ENCODE measurements at regions of chr15 and their contacts with region 1.

Region 1: DNA sequence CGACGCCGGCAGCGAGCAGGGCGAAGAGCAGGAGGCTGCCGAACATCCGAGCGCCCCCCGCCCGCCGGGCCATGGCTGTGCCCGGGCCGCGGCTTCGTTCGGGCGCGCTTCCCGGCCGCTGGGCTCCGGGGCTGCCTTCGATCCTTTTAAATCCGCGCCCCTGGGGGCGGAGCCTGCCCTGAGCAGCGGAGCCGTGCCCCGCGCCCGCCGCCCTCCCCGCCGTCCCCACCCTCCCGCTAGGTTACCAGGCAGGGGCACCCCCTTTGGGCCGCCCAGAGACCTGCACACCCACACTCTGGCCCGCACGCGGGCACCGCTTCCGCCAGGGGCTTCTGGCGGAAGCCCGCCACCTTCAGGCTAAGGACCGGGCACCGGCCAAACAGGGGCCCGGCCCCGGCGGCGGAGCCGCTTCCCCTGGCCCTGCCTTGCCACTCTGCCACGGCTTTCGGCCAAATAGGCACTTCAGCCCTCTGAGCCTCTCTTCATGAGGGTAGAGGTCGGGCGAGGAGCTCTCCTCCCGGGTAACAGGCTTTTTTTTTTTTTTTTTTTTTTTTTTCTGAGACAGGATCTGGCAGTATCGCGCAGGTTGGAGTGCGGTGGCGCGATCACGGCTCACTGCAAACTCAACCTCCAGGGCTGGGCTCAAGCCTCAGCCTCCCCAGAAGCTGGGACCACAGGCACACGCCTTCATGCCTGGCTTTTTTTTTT is at the start of gene NMB:
- DNase-seq: peak; percentile 89
- H3K4me3 ChIP-seq: peak within 1 kb of the TSS; percentile 35 to 76 (median 66)
- H3K27ac ChIP-seq: peak within 1 kb of the TSS; percentile 87 to 92 (median 90)
- H3K4me1 ChIP-seq: peaks cover 0 to 36% (median 21%) of the 10 kb centered on the region in 4 donors
- H3K27me3 ChIP-seq: no peaks in the 10 kb centered on the region
- CTCF ChIP-seq: peak; percentile 19 to 67 (median 38)
- EP300 ChIP-seq: no peak
- POLR2A ChIP-seq: no peak
- total RNA-seq, gene NMB: 3.0 to 8.9 (median 8.0) TPM

Region 2: DNA sequence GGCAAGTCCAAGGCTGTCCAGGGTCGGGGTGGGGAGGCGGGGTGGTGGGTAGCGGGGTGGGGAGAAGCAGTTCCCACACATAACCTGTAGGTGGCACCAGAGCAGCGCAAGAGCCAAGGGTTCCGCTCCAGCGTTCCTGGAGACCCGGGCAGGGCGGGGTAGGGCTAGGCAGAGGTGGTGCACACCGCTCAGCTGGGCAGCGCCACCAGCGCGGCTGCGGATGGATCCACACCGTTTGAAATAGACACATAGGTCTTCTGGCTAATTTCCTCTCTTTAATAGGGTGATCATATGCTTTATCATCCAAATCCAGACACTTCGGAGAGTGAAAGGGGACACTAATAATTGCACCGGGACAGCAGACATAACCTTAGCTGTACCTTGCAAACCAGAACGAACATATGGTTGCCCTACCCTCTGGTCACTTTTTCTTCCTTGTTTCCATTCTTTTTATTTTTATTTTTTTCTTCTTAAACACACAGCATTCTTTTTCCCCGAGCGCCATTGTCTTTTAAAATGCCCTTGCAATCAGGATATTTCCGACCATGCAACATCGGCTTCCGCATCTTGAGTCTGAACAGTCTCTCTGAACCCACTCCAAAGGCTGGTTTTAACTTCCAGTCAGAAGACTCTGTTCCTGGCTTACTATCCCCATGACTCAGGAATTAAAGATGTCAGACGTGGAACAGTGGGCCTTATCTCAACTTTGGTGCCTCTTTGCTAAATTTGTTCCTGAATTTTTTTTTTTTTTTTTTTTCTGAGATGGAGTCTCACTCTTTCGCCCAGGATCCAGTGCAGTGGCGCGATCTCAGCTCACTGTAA is 70.0 kb before region 1 on chr15:
- intact Hi-C with region 1: loop called (anchors 2 kb)
- DNase-seq: peak; percentile 91
- H3K4me3 ChIP-seq: peak overlapping the region in 3 of 4 donors; percentile 29 to 38 (median 34)
- H3K27ac ChIP-seq: peak overlapping the region in 1 of 4 donors; percentile 3
- H3K4me1 ChIP-seq: peaks cover 0 to 9% (median 6%) of the 10 kb centered on the region in 4 donors
- H3K27me3 ChIP-seq: no peaks in the 10 kb centered on the region
- CTCF ChIP-seq: peak; percentile 47 to 99 (median 50)
- EP300 ChIP-seq: no peak
- POLR2A ChIP-seq: no peak

Region 3: DNA sequence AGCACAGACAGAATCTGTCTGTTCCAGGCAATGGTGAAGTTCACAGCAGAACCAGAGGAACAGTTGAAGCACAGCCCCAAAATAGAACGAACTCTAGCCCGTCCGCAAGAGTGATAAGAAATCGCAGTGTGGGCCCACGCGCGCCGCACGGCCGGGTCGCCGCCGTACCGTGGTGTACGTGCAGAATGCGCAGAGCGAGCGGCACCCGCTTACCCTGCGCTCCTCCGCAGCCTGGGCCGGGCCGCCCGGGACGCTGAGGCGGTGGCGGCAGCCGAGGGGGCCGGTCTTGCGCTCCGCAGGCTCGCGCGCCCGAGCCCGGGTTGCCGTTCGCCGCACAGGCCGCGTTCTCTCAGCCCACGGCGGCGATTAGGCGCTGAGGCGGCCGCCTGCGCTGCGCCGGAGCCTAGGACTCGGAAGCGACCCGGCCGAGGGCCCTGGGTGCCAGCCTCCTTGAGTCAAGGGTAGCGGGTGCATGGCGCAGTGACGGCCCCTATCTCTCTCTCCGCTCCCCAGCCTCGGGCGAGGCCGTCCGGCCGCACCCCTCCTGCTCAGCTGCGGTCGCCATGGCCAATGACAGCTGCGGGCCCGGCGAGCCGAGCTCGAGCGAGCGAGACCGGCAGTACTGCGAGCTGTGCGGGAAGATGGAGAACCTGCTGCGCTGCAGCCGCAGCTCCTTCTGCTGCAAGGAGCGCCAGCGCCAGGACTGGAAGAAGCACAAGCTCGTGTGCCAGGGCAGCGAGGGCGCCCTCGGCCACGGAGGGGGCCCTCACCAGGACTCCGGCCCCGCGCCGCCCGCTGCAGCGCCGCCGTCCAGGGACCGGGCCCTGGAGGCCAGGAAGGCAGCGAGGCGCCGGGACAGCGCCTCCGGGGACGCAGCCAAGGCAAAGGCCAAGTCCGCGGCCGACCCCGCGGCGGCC is 24.7 kb before region 1 on chr15:
- intact Hi-C with region 1: loop called (anchors 1 kb)
- DNase-seq: peak; percentile 83
- H3K4me3 ChIP-seq: peak overlapping the region; percentile 55 to 79 (median 67)
- H3K27ac ChIP-seq: peak overlapping the region; percentile 88 to 97 (median 92)
- H3K4me1 ChIP-seq: peaks cover 0 to 48% (median 38%) of the 10 kb centered on the region in 4 donors
- H3K27me3 ChIP-seq: no peaks in the 10 kb centered on the region
- CTCF ChIP-seq: no peak
- EP300 ChIP-seq: no peak
- POLR2A ChIP-seq: no peak

Region 4: DNA sequence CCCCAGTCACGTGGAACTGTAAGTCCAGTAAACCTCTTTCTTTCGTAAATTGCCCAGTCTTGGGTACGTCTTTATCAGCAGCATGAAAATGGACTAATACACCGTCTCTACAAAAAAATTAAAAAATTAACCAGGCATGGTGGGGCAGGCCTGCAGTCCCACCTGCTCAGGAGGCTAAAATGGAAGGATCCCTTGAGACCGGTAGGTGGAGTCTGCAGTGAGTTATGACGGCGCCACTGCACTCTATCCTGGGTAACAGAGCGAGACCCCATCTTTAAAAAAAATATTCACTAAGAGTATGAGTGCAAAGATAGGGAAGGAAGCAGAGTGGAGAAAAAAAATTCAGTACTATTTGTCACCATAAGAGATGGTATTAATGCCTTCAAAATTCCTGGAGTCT is 32.1 kb after region 1 on chr15:
- intact Hi-C with region 1: no loop called
- DNase-seq: no peak
- H3K4me3 ChIP-seq: no peak overlapping the region
- H3K27ac ChIP-seq: no peak overlapping the region
- H3K4me1 ChIP-seq: no peaks in the 10 kb centered on the region
- H3K27me3 ChIP-seq: no peaks in the 10 kb centered on the region
- CTCF ChIP-seq: no peak
- EP300 ChIP-seq: no peak
- POLR2A ChIP-seq: no peak

Region 5: DNA sequence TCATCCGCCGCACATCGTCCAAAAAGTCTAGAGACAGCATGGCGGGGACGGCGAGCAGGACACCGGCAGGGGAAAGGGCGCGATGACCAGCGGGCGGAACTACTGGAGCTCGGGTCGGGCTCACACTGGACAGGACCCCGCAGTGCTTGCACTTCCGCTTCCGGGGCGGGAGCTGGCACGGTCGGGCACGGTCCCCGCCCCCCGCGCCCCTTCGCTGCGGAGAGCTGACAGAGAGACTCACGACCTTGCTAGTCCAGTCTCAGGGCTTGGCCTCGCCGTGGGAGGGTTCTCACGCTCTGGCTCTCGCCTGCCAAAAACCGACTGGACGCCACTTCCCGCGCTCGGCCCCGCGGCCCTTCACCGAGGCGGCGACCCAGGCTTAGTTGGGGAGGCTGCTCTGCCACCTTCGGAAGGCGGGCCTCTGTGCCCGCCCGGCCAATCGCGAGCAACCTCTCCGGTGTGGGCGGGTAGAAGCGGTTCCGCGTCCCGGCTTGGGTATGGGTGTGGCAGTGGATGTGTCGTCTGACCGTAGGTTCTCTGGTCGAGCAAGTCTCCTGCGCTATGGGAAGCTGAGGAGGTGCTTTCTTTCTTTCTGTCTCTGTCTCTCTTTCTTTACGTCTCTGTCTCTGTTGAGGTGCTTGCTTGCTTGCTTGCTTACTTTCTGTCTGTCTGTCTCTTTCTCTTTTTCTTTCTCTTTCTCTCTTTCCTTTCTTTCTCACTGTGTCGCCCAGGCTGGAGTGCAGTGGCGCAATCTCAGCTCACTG is 58.0 kb after region 1 on chr15 and contains the start of gene SEC11A:
- intact Hi-C with region 1: loop called (anchors 2 kb)
- DNase-seq: peak; percentile 96
- H3K4me3 ChIP-seq: peak within 1 kb of the TSS; percentile 71 to 87 (median 76)
- H3K27ac ChIP-seq: peak within 1 kb of the TSS; percentile 86 to 95 (median 94)
- H3K4me1 ChIP-seq: peaks cover 0 to 28% (median 24%) of the 10 kb centered on the region in 4 donors
- H3K27me3 ChIP-seq: no peaks in the 10 kb centered on the region
- CTCF ChIP-seq: no peak
- EP300 ChIP-seq: no peak
- POLR2A ChIP-seq: peak; percentile 60 to 86
- total RNA-seq, gene SEC11A: 83.9 to 153 (median 112) TPM

Region 6: DNA sequence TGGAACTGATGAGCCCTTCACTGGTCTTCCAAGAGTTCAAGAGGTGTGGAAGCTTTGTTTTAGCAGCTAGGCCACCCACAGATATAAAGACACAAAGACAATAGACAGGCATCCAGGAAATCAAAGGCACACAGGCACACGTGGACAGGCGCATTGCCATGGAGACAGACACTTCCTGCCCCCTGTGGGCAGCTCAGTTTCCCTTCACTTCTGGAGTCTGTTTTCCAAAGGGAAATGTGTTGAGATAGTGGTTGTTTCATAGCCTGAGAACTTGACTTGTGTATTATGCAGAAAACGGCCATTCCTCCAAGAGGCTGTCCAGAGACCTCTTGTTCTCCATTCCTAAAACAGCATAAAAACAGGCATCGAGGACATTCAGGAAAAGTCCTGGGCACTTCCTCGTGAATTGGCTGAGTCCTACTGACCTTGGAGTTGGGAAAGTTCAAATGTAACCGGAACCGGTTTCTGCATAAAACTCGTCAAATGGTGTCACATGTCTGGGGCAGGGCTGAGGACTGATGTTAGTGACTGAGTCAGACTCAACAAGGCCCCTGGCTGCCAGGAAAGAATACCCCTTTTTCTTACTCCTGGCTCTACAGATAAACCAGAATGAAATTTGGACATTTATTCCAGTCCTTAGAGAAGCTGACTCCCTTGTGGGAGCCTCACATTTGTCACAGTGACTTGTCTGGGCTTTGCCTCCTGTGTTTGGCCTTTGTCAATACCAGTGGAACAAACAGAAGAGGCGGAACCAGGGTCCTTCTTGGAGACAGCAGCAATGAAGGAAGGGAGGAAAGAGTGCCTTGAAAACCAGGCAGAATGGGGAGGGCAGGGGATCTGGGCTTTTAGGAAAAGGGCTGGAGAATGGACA is 160.3 kb after region 1 on chr15:
- intact Hi-C with region 1: loop called (anchors 5 kb)
- DNase-seq: no peak
- H3K4me3 ChIP-seq: peak overlapping the region in 3 of 4 donors; percentile 44 to 66 (median 55)
- H3K27ac ChIP-seq: peak overlapping the region; percentile 76 to 94 (median 86)
- H3K4me1 ChIP-seq: peaks cover 0 to 67% (median 56%) of the 10 kb centered on the region in 4 donors
- H3K27me3 ChIP-seq: no peaks in the 10 kb centered on the region
- CTCF ChIP-seq: no peak
- EP300 ChIP-seq: no peak
- POLR2A ChIP-seq: no peak

Region 7: DNA sequence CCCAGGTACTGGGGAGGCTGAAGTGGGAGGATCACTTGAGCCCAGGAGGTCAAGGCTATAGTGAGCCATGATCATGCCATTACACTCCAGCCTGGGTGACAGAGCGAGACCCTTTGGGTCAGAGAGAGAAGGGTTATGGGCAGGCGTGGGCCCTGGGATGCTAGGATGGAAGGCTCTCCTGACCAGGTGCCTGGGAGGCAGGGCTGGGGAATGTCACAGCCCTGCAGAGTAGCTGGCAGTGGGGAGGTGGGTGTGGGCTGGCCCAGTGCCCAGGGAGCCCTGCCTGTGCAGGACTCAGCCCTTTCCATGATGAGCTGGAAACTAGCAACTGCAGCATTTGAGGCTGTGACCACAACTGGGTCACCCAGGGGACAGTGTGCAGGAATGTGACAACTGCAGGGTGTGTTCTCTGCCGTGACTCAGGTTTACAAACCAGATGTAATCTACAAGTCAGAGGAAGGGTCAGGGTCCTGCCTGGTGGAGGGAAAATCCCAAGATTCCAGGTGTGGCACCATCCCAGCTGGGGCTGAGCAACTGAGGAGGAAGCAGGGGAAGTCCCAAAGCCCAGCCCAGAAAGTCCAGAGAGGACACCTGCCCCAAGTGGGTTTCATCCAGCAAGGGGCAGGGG is 271.6 kb after region 1 on chr15:
- intact Hi-C with region 1: loop called (anchors 2 kb)
- DNase-seq: no peak
- H3K4me3 ChIP-seq: no peak overlapping the region
- H3K27ac ChIP-seq: no peak overlapping the region
- H3K4me1 ChIP-seq: peaks cover 0 to 8% (median 7%) of the 10 kb centered on the region in 4 donors
- H3K27me3 ChIP-seq: no peaks in the 10 kb centered on the region
- CTCF ChIP-seq: no peak
- EP300 ChIP-seq: no peak
- POLR2A ChIP-seq: no peak